HEK293T (cell line): ENCODE measurements at regions of chr20 and their contacts with region 1.

Region 1: DNA sequence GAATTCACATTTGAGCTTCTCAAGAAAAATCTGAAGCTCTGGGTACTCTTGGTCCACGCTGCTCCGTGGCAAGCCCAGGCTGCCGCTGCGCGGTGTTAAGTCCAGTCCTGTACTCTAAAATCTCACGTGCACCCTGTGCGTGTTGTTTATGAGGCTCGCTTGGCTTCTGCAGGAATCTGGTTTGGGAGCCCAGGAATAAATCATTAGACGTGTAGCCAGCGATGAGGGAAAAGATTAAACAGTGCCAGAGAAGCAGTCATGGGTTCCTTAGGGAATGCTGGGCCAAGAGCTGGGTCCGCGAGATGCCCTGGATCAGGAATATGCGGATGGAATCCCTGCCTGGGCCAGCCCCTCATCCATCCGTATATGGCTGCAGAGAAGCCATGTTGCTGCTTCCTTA is 87.3 kb downstream of the KCNB1 start:
- DNase-seq: no peak

Region 2: GRCh38 chr20:49372095-49372726 is 23.0 kb before region 1 on chr20:
- CTCF ChIA-PET with region 1: no interaction called
- POLR2A ChIA-PET with region 1: no interaction called
- DNase-seq: no peak

Region 3: DNA sequence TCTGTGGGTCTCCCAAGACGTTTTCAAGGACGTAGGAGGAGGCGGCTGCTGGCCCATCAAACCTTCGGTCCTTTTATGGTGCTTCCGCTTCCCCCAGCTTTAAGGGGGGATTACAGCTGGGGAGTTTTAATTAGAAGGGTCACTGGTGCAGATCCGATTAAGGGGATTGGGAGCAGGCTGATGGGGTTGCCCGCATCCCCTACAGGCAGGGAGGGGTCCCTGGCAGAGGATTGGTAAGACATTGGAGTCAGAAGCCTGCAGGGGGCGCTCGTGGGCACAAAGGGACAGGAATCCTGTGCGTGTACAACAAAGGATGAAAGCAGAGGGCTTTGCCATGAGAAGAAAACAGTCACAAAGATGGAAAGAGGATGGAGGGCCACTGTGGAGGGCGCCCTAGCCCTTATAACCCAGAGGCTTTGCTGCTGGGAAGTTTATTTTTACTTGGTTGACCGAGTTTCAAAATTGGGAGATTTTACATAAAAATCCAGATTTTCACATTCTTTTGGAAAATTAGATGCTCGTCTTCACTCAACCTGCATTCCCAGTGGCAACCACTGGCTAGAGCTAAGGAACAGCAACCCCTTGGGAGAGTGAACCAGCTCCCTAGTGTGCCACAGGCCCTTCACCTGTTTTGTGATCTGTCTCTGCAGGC is 10.6 kb before region 1 on chr20:
- CTCF ChIA-PET with region 1: interaction called, 11 read pairs
- POLR2A ChIA-PET with region 1: interaction called, 3 read pairs
- DNase-seq: peak; percentile 79